ENCODE measurements at regions of chr1 and their contacts with region 1.

Region 1: GRCh38 chr1:205680073-205680851 is at the start of gene SLC45A3:
- DNase-seq: no peak
- H3K4me3 ChIP-seq: peak within 1 kb of the TSS; percentile 66
- CTCF ChIP-seq: no peak

Region 2: DNA sequence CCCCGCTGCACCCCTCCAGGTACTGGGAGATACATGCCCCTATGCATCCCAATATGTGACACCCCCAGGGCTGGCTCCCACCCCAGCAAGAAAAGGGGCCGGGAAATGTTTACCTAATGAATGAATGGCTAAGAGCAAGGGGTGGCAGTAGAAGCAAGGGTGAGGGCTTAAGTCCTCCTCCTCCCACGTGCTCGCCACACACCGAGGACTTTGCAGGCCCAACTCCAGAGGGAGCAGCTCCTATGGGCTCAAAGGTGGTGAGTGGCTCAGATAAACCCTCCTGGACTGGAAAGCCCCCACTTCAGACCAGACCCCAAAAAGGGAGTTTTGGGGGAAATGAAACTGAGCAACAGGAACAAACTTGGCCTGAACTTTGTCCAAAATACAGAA is 11.3 kb before region 1 on chr1:
- CTCF ChIA-PET with region 1: interaction called, 17 read pairs
- POLR2A ChIA-PET with region 1: no interaction called
- DNase-seq: no peak
- H3K4me3 ChIP-seq: no peak overlapping the region
- CTCF ChIP-seq: no peak

Region 3: GRCh38 chr1:205870236-205870635 is 190.0 kb after region 1 on chr1:
- CTCF ChIA-PET with region 1: no interaction called
- POLR2A ChIA-PET with region 1: no interaction called
- DNase-seq: no peak
- H3K4me3 ChIP-seq: no peak overlapping the region
- CTCF ChIP-seq: no peak

Measured in AG04449 (cell line).